G401 (cell line): ENCODE measurements at regions of chr20 and their contacts with region 1.

Region 1: DNA sequence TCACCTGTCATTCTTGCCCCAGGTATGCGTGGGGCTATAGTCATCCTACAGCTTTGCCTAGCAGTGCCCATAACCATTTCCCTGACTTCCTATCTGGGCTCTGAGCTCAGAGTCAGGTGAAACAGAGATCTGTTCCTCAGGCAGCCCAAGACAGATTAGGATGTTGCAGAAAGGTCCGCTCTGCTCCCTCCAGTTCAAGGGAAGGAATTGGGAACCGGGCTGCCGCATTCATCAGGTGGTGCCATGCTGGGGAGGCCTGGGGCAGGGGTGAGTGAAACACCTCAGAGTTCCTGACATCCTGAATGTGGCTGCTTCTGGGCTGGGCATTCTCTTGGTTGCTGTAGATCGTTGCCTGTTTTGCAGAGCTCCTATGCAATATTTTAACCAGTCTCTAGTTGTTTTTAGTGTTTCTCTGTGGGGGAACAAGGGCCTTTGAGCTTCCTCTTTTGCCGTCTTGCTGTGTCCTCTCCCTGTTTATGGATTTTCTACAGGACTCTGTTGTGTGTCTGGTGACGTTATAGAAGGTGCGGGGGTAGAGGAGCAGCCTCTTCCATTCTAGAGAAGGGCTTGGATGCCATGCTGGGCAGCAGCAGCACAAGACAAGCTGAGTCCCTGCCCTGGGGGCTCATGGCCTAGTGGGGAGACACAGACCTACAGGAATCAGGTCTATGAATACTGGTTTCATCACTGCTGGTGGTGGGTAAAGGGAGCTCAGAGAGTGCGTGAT is 9.2 kb downstream of the ENTPD6 start:
- DNase-seq: no peak

Region 2: DNA sequence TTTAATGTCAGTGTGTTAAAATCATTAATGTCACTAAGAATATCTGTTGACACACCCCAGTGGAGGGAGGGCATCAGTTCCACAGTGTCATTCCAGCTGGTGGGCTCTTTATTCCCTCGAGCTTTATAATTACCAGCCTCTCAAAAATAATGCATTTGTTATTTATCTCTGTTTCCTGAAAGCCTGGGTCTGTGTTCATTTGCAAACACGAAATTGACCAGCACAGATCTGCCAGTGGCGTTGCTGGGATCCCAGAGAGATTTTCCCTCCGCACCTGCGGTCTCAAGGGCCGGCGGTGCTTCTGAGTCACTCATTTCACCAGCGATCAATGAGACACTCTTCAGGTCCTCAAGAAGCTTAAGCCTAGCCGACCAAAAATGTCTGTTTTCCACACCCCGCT is 37.5 kb after region 1 on chr20:
- in situ Hi-C with region 1: no loop called
- DNase-seq: no peak

Region 3: GRCh38 chr20:25254986-25255680 is 50.4 kb after region 1 on chr20:
- in situ Hi-C with region 1: loop called (anchors 10 kb)
- DNase-seq: no peak

Region 4: GRCh38 chr20:25288266-25289181 is 83.8 kb after region 1 on chr20:
- in situ Hi-C with region 1: no loop called
- DNase-seq: no peak